ENCODE measurements at regions of chr5 and their contacts with region 1.

Region 1: DNA sequence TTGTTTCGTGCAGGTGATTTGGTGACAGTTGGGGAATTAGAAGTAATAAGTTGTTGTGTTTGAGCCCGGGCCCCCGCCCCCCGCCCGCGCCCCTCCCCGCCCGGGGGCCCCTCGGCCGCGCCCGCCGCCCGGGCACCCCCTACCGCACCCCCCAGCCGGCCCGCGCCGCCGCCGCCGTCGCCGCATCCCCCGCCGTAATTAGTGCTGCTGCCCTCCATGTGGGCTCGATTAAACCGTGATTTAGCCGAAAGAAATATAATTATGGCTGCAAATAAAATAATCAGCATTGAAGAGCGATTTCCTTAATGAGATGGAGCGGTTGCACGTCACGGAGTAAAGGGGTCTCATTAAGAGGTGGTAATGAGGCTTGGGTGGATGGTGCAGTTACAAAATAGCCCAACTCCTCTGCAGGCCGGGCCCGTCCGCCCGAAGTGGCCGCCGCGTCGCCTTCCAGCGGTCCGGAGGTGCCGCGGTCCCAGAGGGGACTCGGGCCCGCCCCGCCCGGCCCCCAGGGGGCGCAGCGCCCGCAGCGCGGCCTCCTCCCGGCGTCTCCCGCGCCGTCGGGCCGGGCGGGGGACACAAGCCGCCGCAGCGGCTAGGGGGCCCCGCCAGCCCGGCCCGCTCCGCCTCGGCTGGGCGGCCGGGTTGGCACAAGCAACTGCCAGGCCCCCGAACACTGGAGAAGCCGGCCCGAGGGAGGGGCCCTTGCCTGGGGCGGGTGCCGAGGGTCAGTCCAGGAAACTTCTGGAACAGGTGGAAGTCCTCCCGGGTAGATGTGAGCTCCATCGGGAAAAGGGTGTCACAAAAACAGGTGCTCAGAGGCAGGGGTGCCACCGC is 6.9 kb upstream of the OTP start:
- DNase-seq: peak in 2 of 10 donors; percentile 71 to 83

Region 2: GRCh38 chr5:76547242-76547890 is 1098.0 kb before region 1 on chr5:
- intact Hi-C with region 1: no loop called
- DNase-seq: no peak

Region 3: DNA sequence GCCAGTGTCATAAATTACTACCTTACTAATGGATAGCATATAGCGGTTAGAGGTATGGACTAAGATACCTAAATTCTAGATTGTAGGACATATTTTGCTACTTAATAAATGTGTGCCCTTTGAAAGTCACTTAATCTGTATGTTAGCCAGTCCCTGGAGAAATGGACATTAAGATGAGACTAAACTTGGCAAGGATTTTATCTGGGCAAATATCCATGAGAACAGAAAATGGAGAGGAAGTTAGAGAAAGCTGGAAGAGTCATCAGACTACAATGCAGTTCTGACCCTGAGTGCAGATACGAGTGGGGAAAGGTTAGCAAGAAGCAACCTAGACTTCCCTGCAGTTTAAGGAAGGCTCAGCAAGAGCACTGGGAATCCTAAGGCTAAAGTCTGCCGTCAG is 97.8 kb after region 1 on chr5:
- intact Hi-C with region 1: no loop called
- DNase-seq: no peak

Region 4: GRCh38 chr5:77775790-77776553 is 130.6 kb after region 1 on chr5 and contains the start of gene TBCA:
- intact Hi-C with region 1: loop called (anchors 5 kb)
- DNase-seq: peak; percentile 75 to 98 (median 84)

Region 5: GRCh38 chr5:77844623-77845323 is 199.4 kb after region 1 on chr5:
- intact Hi-C with region 1: loop called (anchors 5 kb)
- DNase-seq: peak in 3 of 10 donors; percentile 55 to 89 (median 79)

Region 6: DNA sequence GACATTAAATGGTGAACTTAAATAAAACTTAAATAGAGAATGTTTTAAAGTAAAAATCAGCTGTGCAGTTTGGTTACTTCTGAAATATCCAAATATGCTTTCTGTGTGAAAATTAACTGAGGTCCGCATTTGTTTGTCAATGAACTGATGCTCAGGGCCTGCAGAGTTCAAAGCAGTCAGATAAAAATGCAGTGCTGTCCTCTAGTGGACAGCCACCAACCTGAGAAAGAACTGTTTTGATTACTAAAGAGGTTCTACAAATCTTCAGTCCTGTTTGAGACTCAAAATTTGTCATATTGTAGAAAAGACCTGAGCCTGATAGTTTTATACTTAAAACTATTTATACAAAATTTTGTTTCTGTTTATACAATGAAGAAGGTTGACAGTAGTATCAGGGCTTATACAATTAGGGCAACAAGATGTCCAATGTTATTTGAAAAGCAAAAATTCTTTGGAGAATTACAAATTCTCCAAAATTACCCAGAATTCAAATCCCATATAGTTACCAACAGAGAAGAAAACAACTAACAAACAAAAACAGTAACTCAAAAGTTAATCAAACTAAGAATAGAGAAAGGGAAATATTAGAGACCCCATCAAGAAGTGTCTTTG is 363.1 kb after region 1 on chr5:
- intact Hi-C with region 1: loop called (anchors 5 kb)
- DNase-seq: peak in 3 of 10 donors; percentile 41 to 75 (median 59)

Region 7: DNA sequence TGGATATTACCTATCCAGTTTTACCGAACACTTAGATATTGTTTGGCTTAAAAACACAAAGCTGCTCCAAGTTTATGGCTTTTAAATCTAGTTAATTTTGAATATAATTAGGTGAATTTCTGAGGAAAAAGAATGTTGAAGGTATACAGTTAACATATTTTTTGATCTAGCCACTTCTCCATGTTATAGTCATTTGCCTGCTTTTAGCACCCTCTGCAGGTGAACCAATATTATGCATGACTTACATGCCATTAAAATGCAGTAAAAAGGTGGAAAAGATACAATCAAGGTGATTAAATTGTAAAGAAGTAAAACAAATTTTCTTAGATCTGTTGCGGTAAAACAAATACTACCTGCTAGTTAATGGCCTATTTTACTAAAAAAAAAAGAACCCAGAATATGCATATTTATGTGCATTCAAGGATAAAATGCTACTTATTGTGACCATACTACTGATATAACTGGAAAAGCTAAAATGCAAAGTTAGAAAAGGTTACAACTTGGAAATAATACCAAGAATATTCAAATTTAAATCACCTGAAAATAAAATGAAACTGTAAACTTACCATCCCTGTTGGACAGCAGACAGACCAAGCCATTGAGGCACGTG is 517.0 kb after region 1 on chr5:
- intact Hi-C with region 1: loop called (anchors 10 kb)
- DNase-seq: no peak

Measured in posterior cingulate gyrus (tissue), 11 donors.